CD4-positive, alpha-beta memory T cell (primary cell): ENCODE measurements at regions of chr15 and their contacts with region 1.

Region 1: DNA sequence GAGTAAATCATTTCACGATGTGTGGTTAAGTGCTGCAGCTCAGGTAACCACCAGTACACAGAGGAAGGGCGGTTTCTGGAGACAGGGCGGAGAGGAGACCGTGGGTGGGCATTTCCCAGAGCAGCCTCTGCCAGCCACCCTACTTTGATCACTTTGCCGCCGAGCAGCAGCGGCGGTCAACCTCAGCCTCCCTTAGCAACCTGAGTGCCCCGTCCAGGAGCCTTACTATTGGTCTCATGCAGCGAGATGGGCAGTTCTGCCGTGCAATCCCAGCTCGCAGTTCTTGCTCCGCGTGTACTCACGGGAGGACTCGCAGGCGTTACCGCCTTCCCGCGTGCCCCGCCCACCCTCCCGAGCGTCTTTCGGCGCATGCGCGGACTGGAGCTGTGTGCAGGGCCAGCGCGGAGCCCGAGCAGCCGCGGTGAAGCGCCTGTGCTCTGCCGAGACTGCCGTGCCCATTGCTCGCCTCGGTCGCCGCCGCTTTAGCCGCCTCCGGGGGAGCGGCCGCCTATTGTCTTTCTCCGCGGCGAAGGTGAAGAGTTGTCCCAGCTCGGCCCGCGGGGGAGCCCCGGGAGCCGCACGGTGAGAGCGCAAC is at the start of gene AKAP13:
- DNase-seq: peak; percentile 92 to 98 (median 96)
- H3K4me3 ChIP-seq: peak within 1 kb of the TSS; percentile 10 to 59
- H3K4me3 Mint-ChIP-seq: peak within 1 kb of the TSS; percentile 88 to 96 (median 91)
- H3K27ac ChIP-seq: peak within 1 kb of the TSS; percentile 85
- H3K27ac Mint-ChIP-seq: peak within 1 kb of the TSS; percentile 88 to 98 (median 96)
- H3K4me1 ChIP-seq: peaks cover 59% of the 10 kb centered on the region
- H3K4me1 Mint-ChIP-seq: peaks cover 43 to 63% (median 51%) of the 10 kb centered on the region in 4 donors
- H3K27me3 ChIP-seq: no peaks in the 10 kb centered on the region
- H3K27me3 Mint-ChIP-seq: no peaks in the 10 kb centered on the region
- total RNA-seq, gene AKAP13: 300 to 319 TPM

Region 2: DNA sequence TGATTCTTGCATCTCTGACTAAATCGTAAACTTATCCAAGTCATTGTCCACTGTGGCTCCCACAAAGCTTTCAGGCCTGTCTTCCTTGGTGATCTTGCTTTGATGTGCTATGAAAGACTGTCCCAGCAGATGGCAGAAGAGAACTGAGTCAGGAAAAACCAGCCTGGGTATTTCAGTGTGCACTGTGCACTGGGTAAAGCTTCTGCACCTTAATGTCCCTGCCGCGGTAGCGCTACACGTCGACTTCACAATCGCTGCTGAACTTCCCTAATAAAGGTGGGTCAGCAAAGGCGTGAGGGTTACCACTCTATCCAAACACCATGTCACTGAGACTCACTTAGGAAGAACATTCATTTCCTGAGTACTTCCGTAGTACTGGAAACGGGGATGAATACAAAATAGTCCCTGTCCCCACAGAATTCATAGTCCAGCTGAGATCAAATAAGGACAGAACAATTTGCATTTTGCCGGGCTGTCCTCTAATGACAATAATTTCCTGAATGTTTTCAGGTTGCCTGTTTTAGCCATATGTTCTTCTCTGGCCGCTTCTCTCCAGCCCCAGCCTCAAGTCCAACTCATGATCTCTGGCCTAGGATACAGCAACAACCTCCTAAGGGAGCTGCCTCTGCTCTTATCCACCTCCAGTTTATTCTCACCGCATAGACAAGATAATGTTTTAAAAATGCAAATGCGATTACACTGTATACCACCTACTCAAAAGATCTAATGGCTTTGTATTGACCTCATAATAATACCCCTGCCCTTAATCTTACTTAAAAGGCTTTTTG is 83.5 kb before region 1 on chr15:
- CTCF ChIA-PET with region 1: interaction called, 11 read pairs
- POLR2A ChIA-PET with region 1: interaction called, 7 read pairs
- intact Hi-C with region 1: no loop called
- DNase-seq: peak; percentile 67 to 75 (median 72)
- H3K4me3 ChIP-seq: peak overlapping the region in 1 of 2 donors; percentile 20
- H3K4me3 Mint-ChIP-seq: peak overlapping the region in 7 of 8 donors; percentile 1 to 70 (median 65)
- H3K27ac ChIP-seq: no peak overlapping the region
- H3K27ac Mint-ChIP-seq: peak overlapping the region in 4 of 7 donors; percentile 24 to 73 (median 27)
- H3K4me1 ChIP-seq: peaks cover 6% of the 10 kb centered on the region
- H3K4me1 Mint-ChIP-seq: peaks cover 8 to 15% (median 10%) of the 10 kb centered on the region in 4 donors
- H3K27me3 ChIP-seq: no peaks in the 10 kb centered on the region
- H3K27me3 Mint-ChIP-seq: peaks cover 0 to under 1% of the 10 kb centered on the region in 2 donors

Region 3: GRCh38 chr15:85407804-85408746 is 27.8 kb after region 1 on chr15:
- CTCF ChIA-PET with region 1: interaction called, 12 read pairs
- POLR2A ChIA-PET with region 1: interaction called, 44 read pairs
- intact Hi-C with region 1: loop called (anchors 1 kb)
- DNase-seq: peak in 4 of 5 donors; percentile 19 to 69 (median 30)
- H3K4me3 ChIP-seq: no peak overlapping the region
- H3K4me3 Mint-ChIP-seq: peak overlapping the region; percentile 25 to 76 (median 72)
- H3K27ac ChIP-seq: peak overlapping the region; percentile 3
- H3K27ac Mint-ChIP-seq: peak overlapping the region; percentile 69 to 94 (median 88)
- H3K4me1 ChIP-seq: peaks cover 46% of the 10 kb centered on the region
- H3K4me1 Mint-ChIP-seq: peaks cover 59 to 90% (median 73%) of the 10 kb centered on the region in 4 donors
- H3K27me3 ChIP-seq: no peaks in the 10 kb centered on the region
- H3K27me3 Mint-ChIP-seq: no peaks in the 10 kb centered on the region

Region 4: GRCh38 chr15:85443593-85444087 is 63.3 kb after region 1 on chr15:
- CTCF ChIA-PET with region 1: interaction called, 3 read pairs
- POLR2A ChIA-PET with region 1: interaction called, 7 read pairs
- intact Hi-C with region 1: loop called (anchors 2 kb)
- DNase-seq: peak; percentile 42 to 65 (median 46)
- H3K4me3 ChIP-seq: no peak overlapping the region
- H3K4me3 Mint-ChIP-seq: peak overlapping the region in 6 of 8 donors; percentile 6 to 68 (median 44)
- H3K27ac ChIP-seq: peak overlapping the region; percentile 5
- H3K27ac Mint-ChIP-seq: peak overlapping the region; percentile 74 to 94 (median 88)
- H3K4me1 ChIP-seq: peaks cover 42% of the 10 kb centered on the region
- H3K4me1 Mint-ChIP-seq: peaks cover 50 to 70% (median 67%) of the 10 kb centered on the region in 4 donors
- H3K27me3 ChIP-seq: no peaks in the 10 kb centered on the region
- H3K27me3 Mint-ChIP-seq: no peaks in the 10 kb centered on the region

Region 5: DNA sequence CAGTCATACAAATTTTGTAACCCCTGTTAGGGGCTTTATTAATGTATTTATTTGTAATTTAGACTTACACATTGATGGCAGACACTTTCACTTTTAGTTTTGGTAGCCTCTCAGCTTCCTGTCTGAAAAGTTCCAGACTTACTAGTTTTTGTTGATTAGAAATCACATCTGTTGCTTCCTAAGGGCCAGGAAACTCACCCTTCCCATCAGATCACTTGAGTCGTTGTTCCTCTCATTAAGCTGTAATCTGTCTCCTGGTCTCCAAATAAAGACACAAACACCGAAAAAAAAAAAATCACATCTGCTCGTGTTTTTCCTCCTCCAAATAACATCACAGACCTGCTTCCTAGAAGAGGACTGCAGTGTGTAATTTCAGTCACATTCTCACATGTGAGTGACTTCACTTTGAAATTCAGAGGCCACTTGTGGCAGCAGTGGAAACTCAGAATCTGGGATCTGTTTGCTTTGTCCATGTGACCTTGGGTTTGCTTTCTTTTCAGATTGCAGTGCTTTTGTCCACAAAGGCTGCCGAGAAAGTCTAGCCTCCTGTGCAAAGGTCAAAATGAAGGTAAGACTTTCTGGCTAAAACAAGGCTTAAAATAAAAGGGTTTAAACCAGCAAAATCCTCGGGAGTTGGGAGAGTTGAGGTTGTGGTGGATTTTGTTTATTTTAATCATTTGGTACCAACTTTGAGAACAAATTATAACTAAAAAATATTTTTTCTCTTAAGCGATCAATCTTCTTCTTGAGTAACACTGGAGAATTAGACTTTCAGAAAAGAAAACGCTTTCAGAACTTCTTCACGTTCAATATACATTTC is 327.4 kb after region 1 on chr15:
- CTCF ChIA-PET with region 1: interaction called, 3 read pairs
- POLR2A ChIA-PET with region 1: no interaction called
- intact Hi-C with region 1: loop called (anchors 10 kb)
- DNase-seq: peak in 2 of 5 donors; percentile 55 to 73
- H3K4me3 ChIP-seq: peak overlapping the region; percentile 42 to 61
- H3K4me3 Mint-ChIP-seq: peak overlapping the region; percentile 83 to 95 (median 87)
- H3K27ac ChIP-seq: peak overlapping the region; percentile 86
- H3K27ac Mint-ChIP-seq: peak overlapping the region; percentile 96 to 100 (median 97)
- H3K4me1 ChIP-seq: peaks cover 72% of the 10 kb centered on the region
- H3K4me1 Mint-ChIP-seq: peaks cover 69 to 89% (median 80%) of the 10 kb centered on the region in 4 donors
- H3K27me3 ChIP-seq: no peaks in the 10 kb centered on the region
- H3K27me3 Mint-ChIP-seq: no peaks in the 10 kb centered on the region